WTC11 (cell line): ENCODE measurements at regions of chr22 and their contacts with region 1.

Region 1: DNA sequence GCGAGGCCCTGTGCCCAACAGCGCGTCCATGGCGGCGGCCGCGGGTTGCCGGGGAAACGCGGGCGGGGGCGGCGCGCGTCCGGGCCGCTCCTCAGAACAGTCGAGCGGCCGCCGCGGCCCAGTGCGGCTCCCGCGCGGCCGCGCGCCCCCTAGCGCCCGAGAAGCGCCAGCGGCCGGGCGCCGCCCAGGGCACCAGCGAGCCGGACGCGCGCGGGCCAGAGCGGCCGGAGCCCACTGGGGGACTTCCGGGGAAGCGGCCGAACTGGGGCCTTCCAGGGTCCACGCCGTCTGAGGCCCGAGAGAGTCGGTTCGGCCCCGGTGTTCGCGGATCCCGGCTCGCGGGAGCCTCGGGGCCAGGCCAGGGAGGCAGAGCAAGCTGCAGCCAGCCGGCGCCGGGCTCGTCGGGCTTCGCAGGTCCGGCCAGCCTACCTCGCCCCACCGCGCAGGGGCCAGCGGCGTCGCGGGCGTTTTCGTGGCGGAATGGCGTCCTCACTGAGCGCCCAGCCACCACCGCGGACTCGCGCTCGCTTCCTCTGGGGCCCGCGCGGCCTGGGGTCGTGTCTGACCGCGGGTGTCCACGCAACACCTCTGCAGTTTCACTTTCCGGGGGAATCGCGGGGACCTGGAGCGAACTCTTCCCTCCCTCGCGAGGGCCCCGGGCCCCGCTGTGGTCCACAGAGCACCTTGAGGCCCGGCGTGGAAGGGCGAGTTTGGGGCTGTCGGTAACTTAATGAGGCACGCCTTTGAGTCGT is at the start of gene DENND6B:
- DNase-seq: peak; percentile 77
- ATAC-seq: peak; percentile 92
- H3K4me3 Mint-ChIP-seq: peak within 1 kb of the TSS; percentile 87
- H3K27ac Mint-ChIP-seq: no peak within 1 kb of the TSS; the same call in 1 of the 2 replicates
- H3K4me1 Mint-ChIP-seq: peaks cover 3% of the 10 kb centered on the region; the same call in 1 of the 2 replicates
- H3K27me3 Mint-ChIP-seq: peaks cover 28% of the 10 kb centered on the region
- CTCF ChIP-seq: peak; percentile 33; the same call in 1 of the 2 replicates
- total RNA-seq, gene DENND6B: 2.3 to 2.7 TPM (median 2.5 TPM) in 3 replicates

Region 2: GRCh38 chr22:50169774-50170341 is 157.3 kb before region 1 on chr22:
- CTCF ChIA-PET with region 1: no interaction called
- POLR2A ChIA-PET with region 1: no interaction called
- DNase-seq: no peak
- ATAC-seq: peak; percentile 35
- H3K4me3 Mint-ChIP-seq: peak overlapping the region; percentile 52
- H3K27ac Mint-ChIP-seq: no peak overlapping the region
- H3K4me1 Mint-ChIP-seq: peaks cover 3% of the 10 kb centered on the region; the same call in 1 of the 2 replicates
- H3K27me3 Mint-ChIP-seq: peaks cover 25% of the 10 kb centered on the region
- CTCF ChIP-seq: no peak

Region 3: DNA sequence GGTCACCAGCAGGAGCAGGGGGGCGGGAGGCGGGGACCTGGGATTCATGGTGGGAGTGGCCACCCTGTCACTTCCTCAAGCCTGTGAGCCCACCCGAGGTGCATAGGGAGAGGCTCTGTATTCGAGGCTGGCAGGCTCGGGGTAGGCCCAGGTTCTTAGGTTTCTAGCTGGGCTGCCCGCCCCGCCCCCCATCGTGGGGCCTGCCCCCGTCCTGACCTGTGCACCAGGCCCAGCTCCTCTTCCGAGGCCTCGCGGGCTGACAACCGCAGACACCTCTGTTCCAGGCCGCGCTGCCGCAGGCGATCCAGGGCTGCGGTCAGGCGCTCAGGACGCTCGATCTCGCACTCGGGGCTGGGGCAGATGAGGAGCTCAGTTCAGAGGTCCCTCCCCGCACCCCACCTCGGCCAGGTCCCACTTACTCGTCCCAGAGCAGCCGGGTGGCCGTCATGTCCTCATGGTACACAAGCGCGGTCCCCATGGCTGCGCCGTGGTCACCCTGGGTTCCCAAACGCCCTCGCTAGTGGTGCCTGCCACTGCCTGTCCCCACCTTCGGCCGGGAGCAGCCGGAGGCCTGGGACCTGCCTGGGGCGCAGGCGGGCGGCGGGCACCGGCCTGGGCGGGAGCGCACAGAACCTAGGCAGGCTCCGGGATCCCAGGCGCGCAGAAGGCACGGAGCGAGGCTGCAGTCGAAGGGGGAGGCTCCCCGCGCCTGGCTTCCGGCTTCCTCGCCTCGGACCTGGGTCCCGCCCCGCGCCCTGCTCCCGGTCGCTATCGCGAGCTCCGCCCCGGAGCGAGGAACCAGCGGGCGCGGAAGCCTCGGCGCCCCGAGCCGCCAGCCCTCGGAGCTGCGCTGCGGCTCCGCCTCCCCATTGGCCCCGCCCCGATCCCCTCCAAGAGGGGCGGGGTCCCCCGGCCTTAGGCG is 76.3 kb before region 1 on chr22 and contains the start of gene HDAC10:
- CTCF ChIA-PET with region 1: interaction called, 22 read pairs
- POLR2A ChIA-PET with region 1: no interaction called
- DNase-seq: peak; percentile 89
- ATAC-seq: peak; percentile 74
- H3K4me3 Mint-ChIP-seq: peak within 1 kb of the TSS; percentile 72
- H3K27ac Mint-ChIP-seq: no peak within 1 kb of the TSS
- H3K4me1 Mint-ChIP-seq: peaks cover 4% of the 10 kb centered on the region; the same call in 1 of the 2 replicates
- H3K27me3 Mint-ChIP-seq: no peaks in the 10 kb centered on the region; the same call in 1 of the 2 replicates
- CTCF ChIP-seq: no peak
- total RNA-seq, gene HDAC10: 31.9 to 40.9 TPM (median 38.2 TPM) in 3 replicates

Region 4: DNA sequence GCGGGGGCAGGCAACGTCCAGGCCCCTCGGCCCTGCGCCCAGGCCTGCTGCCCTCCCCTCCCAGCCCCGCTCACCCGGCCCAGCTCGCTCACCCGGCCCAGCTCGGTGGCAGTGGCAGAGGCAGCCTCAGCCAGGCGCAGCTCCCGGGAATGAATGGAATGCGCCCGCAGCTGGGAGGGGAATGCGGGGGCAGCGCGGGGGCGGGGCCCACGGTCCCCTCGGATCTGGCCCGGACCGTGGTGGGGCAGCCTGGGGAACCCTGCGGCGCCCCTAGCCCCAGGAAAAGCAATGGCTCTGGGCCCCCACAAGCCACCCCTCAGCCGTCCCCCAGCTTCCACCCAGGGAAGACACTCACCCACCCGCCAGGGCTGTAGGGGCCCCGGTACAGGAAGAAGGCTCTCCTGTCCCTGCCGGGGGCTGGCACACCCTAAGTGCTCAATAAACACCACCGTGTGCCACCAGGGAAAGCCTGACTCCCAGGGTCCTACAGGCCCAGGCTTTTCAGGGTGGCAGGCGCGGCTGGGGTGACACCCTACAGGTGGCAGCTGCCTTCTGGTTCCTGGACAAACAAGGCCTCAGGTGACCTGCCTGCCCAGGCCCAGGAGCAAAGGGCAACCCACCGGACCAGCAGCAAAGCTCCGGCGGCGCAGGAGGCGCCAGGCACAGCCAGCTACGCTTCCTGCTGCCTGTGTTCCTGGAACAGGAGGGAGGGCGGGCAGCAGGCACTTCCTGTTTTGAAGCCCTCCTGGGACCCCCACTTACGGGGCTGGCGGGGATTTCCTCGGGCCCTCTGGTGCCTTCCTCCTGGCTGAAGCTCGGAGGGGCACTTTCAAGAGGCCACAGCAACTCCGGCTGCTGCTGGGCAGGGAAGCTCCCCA is 33.5 kb before region 1 on chr22:
- CTCF ChIA-PET with region 1: interaction called, 41 read pairs
- POLR2A ChIA-PET with region 1: interaction called, 3 read pairs
- DNase-seq: peak; percentile 85
- ATAC-seq: peak; percentile 89
- H3K4me3 Mint-ChIP-seq: no peak overlapping the region
- H3K27ac Mint-ChIP-seq: peak overlapping the region; percentile 72; the same call in 1 of the 2 replicates
- H3K4me1 Mint-ChIP-seq: peaks cover 27% of the 10 kb centered on the region
- H3K27me3 Mint-ChIP-seq: no peaks in the 10 kb centered on the region
- CTCF ChIP-seq: no peak

Region 5: DNA sequence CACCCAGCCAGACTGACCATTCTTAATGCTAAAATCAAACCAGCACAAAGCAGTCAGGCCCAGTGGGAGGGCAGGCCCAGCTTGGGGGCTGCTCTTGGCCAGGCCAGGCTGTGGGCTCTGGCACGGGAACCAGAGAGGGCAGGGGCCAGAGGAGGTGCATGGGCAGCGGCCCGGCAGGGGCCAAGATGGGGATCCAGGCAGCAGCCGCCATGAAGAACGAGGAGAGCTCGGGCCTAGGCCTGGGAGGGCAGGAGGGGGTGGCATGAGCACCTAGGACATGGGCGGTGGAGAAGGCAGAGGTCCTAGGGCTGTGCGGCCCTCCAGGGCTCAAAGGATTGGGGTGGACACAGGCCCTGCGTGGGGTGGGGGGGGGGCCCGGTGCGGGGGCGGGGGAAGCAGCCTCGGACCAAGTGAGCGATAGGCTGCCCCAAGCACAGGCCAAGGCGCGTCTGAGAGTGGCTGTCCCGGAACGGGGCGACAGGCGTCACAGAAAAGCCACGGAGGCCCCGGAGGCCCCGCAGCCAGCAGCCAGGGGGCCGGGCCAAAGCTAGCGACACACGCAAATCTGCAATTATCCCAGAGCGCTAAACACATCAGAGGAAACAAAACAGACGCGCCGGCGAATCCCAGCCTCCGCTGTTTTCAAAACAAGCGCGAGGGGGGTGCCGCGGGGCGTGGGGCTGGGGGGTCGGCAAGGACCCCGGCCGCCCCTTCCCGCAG is 28.0 kb before region 1 on chr22:
- CTCF ChIA-PET with region 1: interaction called, 41 read pairs
- POLR2A ChIA-PET with region 1: no interaction called
- DNase-seq: no peak
- ATAC-seq: no peak
- H3K4me3 Mint-ChIP-seq: peak overlapping the region; percentile 61
- H3K27ac Mint-ChIP-seq: no peak overlapping the region
- H3K4me1 Mint-ChIP-seq: peaks cover 29% of the 10 kb centered on the region
- H3K27me3 Mint-ChIP-seq: no peaks in the 10 kb centered on the region
- CTCF ChIP-seq: no peak

Region 6: GRCh38 chr22:50432131-50432876 is 105.2 kb after region 1 on chr22:
- CTCF ChIA-PET with region 1: no interaction called
- POLR2A ChIA-PET with region 1: no interaction called
- DNase-seq: no peak
- ATAC-seq: no peak
- H3K4me3 Mint-ChIP-seq: no peak overlapping the region
- H3K27ac Mint-ChIP-seq: no peak overlapping the region
- H3K4me1 Mint-ChIP-seq: no peaks in the 10 kb centered on the region
- H3K27me3 Mint-ChIP-seq: no peaks in the 10 kb centered on the region
- CTCF ChIP-seq: no peak